SK-N-SH (cell line): ENCODE measurements at regions of chrX and their contacts with region 1.

Region 1: GRCh38 chrX:153460845-153461244 is 9.5 kb downstream of the HAUS7 start:
- DNase-seq: peak; percentile 83
- H3K4me3 ChIP-seq: no peak overlapping the region
- H3K27ac ChIP-seq: no peak overlapping the region
- H3K4me1 ChIP-seq: peaks cover 0 to 14% of the 10 kb centered on the region in 2 experiments; a peak in 1 of 4 replicates
- H3K27me3 ChIP-seq: no peaks in the 10 kb centered on the region; the same call in 1 of the 2 replicates
- CTCF ChIP-seq: peak; percentile 86
- EP300 ChIP-seq: no peak
- RAD21 ChIP-seq: peak; percentile 58

Region 2: GRCh38 chrX:153307276-153308178 is 153.3 kb before region 1 on chrX:
- CTCF ChIA-PET with region 1: no interaction called
- POLR2A ChIA-PET with region 1: no interaction called
- DNase-seq: no peak
- H3K4me3 ChIP-seq: no peak overlapping the region
- H3K27ac ChIP-seq: no peak overlapping the region
- H3K4me1 ChIP-seq: no peaks in the 10 kb centered on the region
- H3K27me3 ChIP-seq: peaks cover 55% of the 10 kb centered on the region
- CTCF ChIP-seq: no peak
- EP300 ChIP-seq: no peak
- RAD21 ChIP-seq: no peak

Region 3: DNA sequence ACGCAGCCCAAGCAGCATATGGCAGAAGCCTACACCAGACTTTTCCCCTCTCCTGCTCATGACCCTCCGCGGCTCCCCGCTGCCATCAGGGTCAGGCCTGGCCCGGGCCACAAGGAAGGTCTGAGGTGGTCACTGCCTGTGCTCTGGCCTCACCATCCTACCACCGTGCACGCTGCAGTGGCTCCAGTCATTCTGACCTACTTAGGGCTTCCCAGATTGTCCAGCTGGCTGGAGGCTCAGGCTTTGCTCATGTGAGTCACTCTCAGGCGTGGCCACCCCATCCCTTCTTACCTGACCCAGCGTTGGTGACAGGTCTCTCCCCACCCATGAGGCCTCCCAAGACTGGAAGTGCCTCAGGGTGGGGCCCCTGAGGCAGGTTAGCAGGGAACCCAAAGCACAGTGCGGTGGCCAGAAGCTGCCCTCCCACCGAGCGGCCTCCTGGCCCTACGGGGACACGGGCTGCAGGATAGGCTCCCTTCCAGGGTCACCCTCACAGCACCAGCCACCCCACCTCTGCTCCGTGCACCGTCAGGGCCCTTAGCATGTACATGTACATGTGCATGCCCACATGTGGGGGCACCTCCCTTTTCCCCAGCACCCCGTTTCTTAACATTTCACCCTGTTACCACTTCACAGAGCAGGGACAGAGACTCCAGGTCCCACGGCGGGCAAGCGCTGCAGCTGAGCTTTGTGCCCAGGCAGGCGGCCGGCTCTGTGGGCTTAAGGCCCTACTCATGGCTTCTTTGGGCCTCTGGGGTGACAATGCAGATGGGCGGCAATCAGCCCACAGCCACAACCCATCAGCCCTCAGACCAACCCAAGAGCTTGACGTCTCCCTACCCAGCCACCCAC is 17.1 kb before region 1 on chrX:
- CTCF ChIA-PET with region 1: interaction called, 13 read pairs
- POLR2A ChIA-PET with region 1: no interaction called
- DNase-seq: no peak
- H3K4me3 ChIP-seq: no peak overlapping the region
- H3K27ac ChIP-seq: no peak overlapping the region
- H3K4me1 ChIP-seq: no peaks in the 10 kb centered on the region
- H3K27me3 ChIP-seq: peaks cover 35% of the 10 kb centered on the region
- CTCF ChIP-seq: no peak
- EP300 ChIP-seq: no peak
- RAD21 ChIP-seq: no peak

Region 4: GRCh38 chrX:153476647-153477362 is 16.0 kb after region 1 on chrX:
- CTCF ChIA-PET with region 1: interaction called, 26 read pairs
- POLR2A ChIA-PET with region 1: no interaction called
- DNase-seq: peak; percentile 89
- H3K4me3 ChIP-seq: no peak overlapping the region
- H3K27ac ChIP-seq: peak overlapping the region; percentile 72 to 94
- H3K4me1 ChIP-seq: peaks cover 21 to 41% of the 10 kb centered on the region in 2 experiments; a peak in 3 of 4 replicates
- H3K27me3 ChIP-seq: no peaks in the 10 kb centered on the region
- CTCF ChIP-seq: no peak
- EP300 ChIP-seq: peak; percentile 24 to 89
- RAD21 ChIP-seq: no peak

Region 5: DNA sequence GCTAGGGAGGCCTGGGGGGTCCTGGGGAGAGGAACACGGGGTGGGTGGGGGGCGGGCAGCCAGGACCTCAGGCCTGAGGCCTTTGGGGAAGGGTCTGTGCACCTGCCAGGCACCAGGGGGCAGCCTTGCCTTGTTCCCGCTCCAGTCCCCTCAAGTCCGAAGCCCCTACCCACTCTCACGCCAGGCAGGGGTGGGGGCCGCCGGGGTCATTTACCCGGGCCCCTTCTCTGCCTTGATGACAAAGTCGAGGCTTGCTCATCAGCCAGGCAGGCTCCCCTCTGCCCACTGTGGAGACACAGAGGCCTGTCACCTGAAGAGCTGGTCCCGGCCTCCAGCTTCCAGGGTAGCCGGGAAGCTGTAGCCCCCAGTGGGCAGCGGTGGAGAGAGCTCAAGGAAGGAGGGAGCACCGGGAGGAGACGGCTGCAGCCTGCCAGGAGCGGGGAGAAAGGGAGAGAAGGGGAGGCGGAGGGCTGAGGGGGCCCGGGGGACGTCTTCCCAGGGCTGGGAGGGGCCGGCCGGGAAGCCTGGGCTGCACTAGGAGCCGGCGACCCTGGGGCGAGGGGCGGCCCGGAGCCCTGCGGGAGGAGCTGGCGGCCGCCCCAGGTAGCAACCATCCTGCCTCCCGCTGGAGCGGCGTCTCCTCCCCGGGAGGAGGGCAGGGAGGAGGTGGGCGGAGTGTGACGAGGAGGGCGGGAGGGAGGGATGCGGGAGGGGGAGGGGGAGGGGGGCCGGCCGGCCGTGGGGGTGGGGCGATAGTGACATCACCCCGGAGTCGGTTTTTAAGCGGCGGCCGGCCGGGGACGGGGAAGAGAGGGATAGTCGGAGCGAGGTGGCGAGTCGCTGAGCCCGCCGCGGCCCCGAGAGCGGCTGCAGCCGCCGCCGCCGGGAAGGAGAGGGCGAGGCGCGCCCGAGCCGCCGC is 226.5 kb after region 1 on chrX and contains the start of gene SLC6A8:
- CTCF ChIA-PET with region 1: no interaction called
- POLR2A ChIA-PET with region 1: no interaction called
- DNase-seq: peak; percentile 87
- H3K4me3 ChIP-seq: peak within 1 kb of the TSS in 1 of 2 experiments; percentile 56; a peak in 2 of 4 replicates
- H3K27ac ChIP-seq: peak within 1 kb of the TSS in 1 of 2 experiments; percentile 69; a peak in 2 of 4 replicates
- H3K4me1 ChIP-seq: peaks cover 0 to 43% of the 10 kb centered on the region in 2 experiments; a peak in 1 of 4 replicates
- H3K27me3 ChIP-seq: peaks cover 7% of the 10 kb centered on the region; the same call in 1 of the 2 replicates
- CTCF ChIP-seq: peak; percentile 30
- EP300 ChIP-seq: no peak
- RAD21 ChIP-seq: peak; percentile 30; the same call in 1 of the 2 replicates
- polyA plus RNA-seq, gene SLC6A8: 22.3 and 30.8 TPM in 2 replicates